Naive thymus-derived CD4-positive, alpha-beta T cell (primary cell): ENCODE measurements at regions of chr11 and their contacts with region 1.

Region 1: GRCh38 chr11:66311965-66312548 is 4.8 kb downstream of the CD248 start:
- DNase-seq: peak; percentile 93 to 100 (median 100)
- ATAC-seq: peak; percentile 84
- H3K4me3 ChIP-seq: peak overlapping the region; percentile 92
- H3K4me3 Mint-ChIP-seq: peak overlapping the region; percentile 63 to 97 (median 94)
- H3K27ac ChIP-seq: peak overlapping the region; percentile 79
- H3K27ac Mint-ChIP-seq: peak overlapping the region; percentile 93 to 100 (median 98)
- H3K4me1 ChIP-seq: peaks cover 11 to 34% of the 10 kb centered on the region in 2 donors
- H3K4me1 Mint-ChIP-seq: peaks cover 17 to 34% (median 25%) of the 10 kb centered on the region in 7 donors
- H3K27me3 ChIP-seq: no peaks in the 10 kb centered on the region
- H3K27me3 Mint-ChIP-seq: peaks cover 0 to 2% (median 0%) of the 10 kb centered on the region in 5 donors

Region 2: DNA sequence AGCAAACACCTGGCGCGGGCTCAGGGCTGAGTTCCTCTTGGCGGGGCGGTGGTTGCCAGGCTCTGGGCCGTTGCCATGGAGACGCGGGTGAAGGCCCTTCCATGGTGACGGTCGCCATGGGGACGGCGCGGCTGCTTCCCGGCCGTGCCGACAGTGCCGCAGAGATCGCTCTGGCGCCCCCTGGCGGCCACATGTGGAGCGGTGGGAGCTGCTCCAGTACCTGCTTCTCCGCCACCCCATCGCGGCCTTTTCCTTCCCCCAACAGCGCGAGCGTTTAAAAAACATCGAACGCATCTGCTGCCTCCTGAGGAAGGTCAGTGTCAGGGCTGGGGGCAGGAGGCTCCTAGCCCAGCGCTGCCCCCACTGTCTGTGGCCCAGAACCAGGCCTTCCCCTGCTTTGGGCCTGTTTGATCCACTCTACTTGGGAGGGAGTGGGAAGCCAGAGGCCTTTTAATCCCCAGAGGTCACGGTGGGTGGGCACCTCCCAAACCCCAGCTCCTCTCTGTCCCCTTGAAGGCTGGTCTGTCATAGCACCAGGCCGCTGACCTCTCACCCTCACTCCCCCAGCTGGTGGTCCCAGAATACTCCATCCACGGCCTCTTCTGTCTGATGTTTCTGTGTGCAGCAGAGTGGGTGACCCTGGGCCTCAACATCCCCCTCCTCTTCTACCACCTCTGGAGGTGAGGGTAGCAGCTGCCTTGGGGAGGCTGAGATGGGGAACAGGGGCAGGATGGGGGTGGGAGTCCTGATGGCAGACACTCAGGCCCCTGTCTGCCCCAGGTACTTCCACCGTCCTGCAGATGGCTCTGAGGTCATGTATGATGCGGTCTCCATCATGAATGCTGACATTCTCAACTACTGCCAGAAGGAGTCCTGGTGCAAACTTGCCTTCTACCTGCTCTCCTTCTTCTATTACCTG is 29.3 kb before region 1 on chr11:
- CTCF ChIA-PET with region 1: interaction called, 12 read pairs
- POLR2A ChIA-PET with region 1: interaction called, 6 read pairs
- intact Hi-C with region 1: no loop called
- DNase-seq: peak; percentile 96 to 100 (median 99)
- ATAC-seq: peak; percentile 94
- H3K4me3 ChIP-seq: no peak overlapping the region
- H3K4me3 Mint-ChIP-seq: peak overlapping the region in 9 of 10 donors; percentile 16 to 72 (median 59)
- H3K27ac ChIP-seq: peak overlapping the region; percentile 27
- H3K27ac Mint-ChIP-seq: peak overlapping the region; percentile 68 to 93 (median 85)
- H3K4me1 ChIP-seq: peaks cover 16 to 21% of the 10 kb centered on the region in 2 donors
- H3K4me1 Mint-ChIP-seq: peaks cover 18 to 52% (median 37%) of the 10 kb centered on the region in 7 donors
- H3K27me3 ChIP-seq: no peaks in the 10 kb centered on the region
- H3K27me3 Mint-ChIP-seq: peaks cover 0 to 14% (median 0%) of the 10 kb centered on the region in 5 donors

Region 3: DNA sequence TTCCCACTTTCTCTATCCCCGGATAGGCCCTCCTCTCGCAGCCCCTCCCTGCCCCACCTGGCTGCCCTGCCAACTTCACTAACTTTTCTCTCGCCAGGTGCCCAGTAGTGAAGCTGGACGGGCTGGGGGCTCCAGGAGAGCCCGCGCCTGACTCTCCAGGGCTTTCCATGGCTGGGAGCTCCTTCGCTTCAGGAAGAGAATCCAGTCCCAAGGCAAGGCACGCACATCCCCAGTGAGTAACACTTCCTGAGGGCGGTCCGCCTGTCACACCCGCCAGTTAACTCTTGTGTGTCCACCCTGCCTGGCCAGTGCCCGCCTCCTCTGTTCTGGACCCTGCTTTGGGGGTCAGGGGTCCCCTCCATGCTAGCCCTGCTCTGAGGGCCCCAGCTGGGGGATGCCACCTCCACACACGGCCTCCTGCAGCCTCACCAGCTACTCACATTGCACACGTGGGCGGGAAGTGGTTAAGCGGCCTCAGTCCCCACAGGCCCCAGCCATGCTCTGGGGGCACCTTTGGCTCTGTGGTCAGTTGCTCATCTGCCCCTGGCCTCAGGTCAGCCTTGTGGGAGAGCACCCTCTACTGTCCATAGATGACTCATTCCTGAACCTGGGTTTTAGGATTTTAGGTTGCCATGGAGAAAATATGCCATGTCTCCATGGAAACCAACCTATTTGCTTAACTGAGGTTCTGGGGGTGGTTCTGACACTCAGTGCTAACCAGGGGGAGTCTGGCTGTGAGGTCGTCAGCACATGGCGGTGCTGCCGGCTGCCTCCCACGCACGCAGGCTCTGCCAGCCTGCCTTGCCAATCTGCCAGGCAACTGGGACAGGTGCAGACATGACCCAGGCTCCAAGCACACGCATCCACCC is 24.4 kb after region 1 on chr11 and contains the start of gene RIN1:
- CTCF ChIA-PET with region 1: interaction called, 52 read pairs
- POLR2A ChIA-PET with region 1: interaction called, 28 read pairs
- intact Hi-C with region 1: no loop called
- DNase-seq: peak in 3 of 9 donors; percentile 24 to 62 (median 53)
- ATAC-seq: peak; percentile 85
- H3K4me3 ChIP-seq: peak within 1 kb of the TSS; percentile 52
- H3K4me3 Mint-ChIP-seq: peak within 1 kb of the TSS; percentile 77 to 96 (median 90)
- H3K27ac ChIP-seq: peak within 1 kb of the TSS; percentile 70
- H3K27ac Mint-ChIP-seq: peak within 1 kb of the TSS in 8 of 9 donors; percentile 8 to 88 (median 64)
- H3K4me1 ChIP-seq: peaks cover 7 to 15% of the 10 kb centered on the region in 2 donors
- H3K4me1 Mint-ChIP-seq: peaks cover 0 to 21% (median 11%) of the 10 kb centered on the region in 7 donors
- H3K27me3 ChIP-seq: no peaks in the 10 kb centered on the region
- H3K27me3 Mint-ChIP-seq: peaks cover 0 to 2% (median 0%) of the 10 kb centered on the region in 5 donors
- total RNA-seq, gene RIN1: 1.4 to 22.9 (median 12.3) TPM

Region 4: GRCh38 chr11:66386171-66387069 is 74.4 kb after region 1 on chr11:
- CTCF ChIA-PET with region 1: interaction called, 58 read pairs
- POLR2A ChIA-PET with region 1: interaction called, 11 read pairs
- intact Hi-C with region 1: loop called (anchors 1 kb)
- DNase-seq: peak; percentile 59 to 83 (median 75)
- ATAC-seq: peak; percentile 83
- H3K4me3 ChIP-seq: no peak overlapping the region
- H3K4me3 Mint-ChIP-seq: peak overlapping the region; percentile 5 to 71 (median 40)
- H3K27ac ChIP-seq: no peak overlapping the region
- H3K27ac Mint-ChIP-seq: peak overlapping the region in 4 of 9 donors; percentile 0 to 20 (median 6)
- H3K4me1 ChIP-seq: peaks cover 4 to 8% of the 10 kb centered on the region in 2 donors
- H3K4me1 Mint-ChIP-seq: peaks cover 0 to 12% (median 7%) of the 10 kb centered on the region in 7 donors
- H3K27me3 ChIP-seq: no peaks in the 10 kb centered on the region
- H3K27me3 Mint-ChIP-seq: peaks cover 0 to 15% (median 0%) of the 10 kb centered on the region in 5 donors

Region 5: DNA sequence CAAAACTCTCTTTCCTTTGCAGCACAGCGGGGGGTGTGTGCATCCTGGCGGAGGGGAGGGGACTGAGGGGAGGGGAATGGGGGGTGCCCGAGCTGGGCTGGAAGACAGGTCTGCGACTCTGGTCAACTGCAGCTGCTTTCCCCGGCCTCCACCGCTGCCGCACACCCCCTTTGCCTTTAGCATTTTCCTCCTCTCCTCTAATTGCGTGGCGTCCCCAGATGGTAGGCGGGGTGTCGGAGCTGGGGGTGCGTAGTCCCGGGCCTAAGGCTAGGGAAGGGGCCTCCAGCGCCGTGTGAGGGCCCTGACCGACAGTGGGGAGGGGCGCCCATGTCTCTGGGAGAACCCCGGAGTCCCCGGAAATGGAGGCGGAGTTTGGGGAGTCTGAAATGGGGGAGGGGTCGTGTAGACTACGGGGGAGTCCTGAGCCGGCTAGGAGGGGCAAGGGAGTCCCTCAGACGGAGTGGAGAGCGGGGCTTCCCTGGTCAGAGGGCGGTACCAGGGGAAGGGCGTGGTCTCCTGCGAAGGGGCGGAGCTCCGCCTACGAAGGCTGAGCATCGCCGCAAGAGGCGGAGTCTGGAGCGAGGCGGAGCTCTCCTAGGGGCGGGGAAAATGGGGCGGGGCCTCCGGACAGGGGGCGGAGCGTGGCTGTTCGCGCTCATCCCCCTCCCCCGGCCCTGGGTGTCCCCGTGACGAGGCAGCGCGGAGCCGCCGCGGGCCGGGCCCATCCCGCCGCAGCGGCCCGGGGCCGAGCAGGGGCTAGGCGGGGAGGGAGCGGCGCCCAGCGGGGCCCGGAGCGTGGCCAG is 154.4 kb after region 1 on chr11 and contains the start of gene PELI3:
- CTCF ChIA-PET with region 1: interaction called, 4 read pairs
- POLR2A ChIA-PET with region 1: no interaction called
- intact Hi-C with region 1: loop called (anchors 1 kb)
- DNase-seq: peak; percentile 86 to 95 (median 92)
- ATAC-seq: peak; percentile 97
- H3K4me3 ChIP-seq: peak within 1 kb of the TSS; percentile 78
- H3K4me3 Mint-ChIP-seq: peak within 1 kb of the TSS; percentile 89 to 96 (median 90)
- H3K27ac ChIP-seq: peak within 1 kb of the TSS; percentile 87
- H3K27ac Mint-ChIP-seq: peak within 1 kb of the TSS; percentile 87 to 97 (median 93)
- H3K4me1 ChIP-seq: peaks cover 8 to 10% of the 10 kb centered on the region in 2 donors
- H3K4me1 Mint-ChIP-seq: peaks cover 4 to 39% (median 24%) of the 10 kb centered on the region in 7 donors
- H3K27me3 ChIP-seq: no peaks in the 10 kb centered on the region
- H3K27me3 Mint-ChIP-seq: no peaks in the 10 kb centered on the region
- total RNA-seq, gene PELI3: 10.6 to 27.3 (median 18.6) TPM

Region 6: GRCh38 chr11:66677599-66678375 is 365.7 kb after region 1 on chr11 and contains the start of gene RBM4B:
- CTCF ChIA-PET with region 1: no interaction called
- POLR2A ChIA-PET with region 1: interaction called, 4 read pairs
- intact Hi-C with region 1: loop called in 1 of 2 experiments (anchors 1 kb)
- DNase-seq: peak; percentile 89 to 96 (median 94)
- ATAC-seq: peak; percentile 94
- H3K4me3 ChIP-seq: peak within 1 kb of the TSS; percentile 100
- H3K4me3 Mint-ChIP-seq: peak within 1 kb of the TSS; percentile 87 to 98 (median 96)
- H3K27ac ChIP-seq: peak within 1 kb of the TSS; percentile 95
- H3K27ac Mint-ChIP-seq: peak within 1 kb of the TSS; percentile 94 to 100 (median 99)
- H3K4me1 ChIP-seq: peaks cover 23 to 31% of the 10 kb centered on the region in 2 donors
- H3K4me1 Mint-ChIP-seq: peaks cover 21 to 49% (median 37%) of the 10 kb centered on the region in 7 donors
- H3K27me3 ChIP-seq: no peaks in the 10 kb centered on the region
- H3K27me3 Mint-ChIP-seq: no peaks in the 10 kb centered on the region
- total RNA-seq, gene RBM4B: 9.8 to 27.2 (median 19.7) TPM

Region 7: DNA sequence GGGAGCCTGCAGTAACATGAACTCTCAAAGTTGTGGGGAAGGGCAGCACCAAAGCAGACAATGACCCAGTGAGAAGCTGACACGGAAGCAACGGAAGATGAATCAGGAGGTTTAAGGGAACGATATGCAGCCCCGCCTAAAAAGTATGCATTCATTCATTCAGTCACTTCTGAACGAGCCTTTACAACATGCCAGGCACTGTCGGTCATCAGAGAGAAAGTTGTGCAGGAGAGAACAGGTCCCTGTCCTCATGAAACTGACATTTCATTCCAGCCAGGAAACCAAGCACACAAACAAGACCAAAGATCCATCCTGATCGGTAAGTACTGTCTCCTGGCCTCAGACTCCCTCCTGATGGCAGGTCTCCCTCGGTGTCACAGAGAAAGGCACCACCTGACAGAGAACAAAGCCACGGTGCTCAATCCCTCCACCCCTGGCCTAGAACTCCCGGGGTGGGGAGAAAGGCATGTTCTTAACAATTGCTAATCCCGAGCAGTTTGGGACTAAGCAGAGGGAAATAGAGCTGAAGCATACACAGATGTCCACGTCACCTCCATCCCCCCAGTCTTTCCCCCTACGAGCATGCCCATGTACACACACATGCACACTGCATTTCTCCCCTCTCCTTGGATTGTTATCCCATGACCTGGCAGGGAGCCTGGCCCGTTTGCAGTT is 594.1 kb after region 1 on chr11:
- CTCF ChIA-PET with region 1: no interaction called
- POLR2A ChIA-PET with region 1: no interaction called
- intact Hi-C with region 1: no loop called
- DNase-seq: no peak
- ATAC-seq: no peak
- H3K4me3 ChIP-seq: no peak overlapping the region
- H3K4me3 Mint-ChIP-seq: no peak overlapping the region
- H3K27ac ChIP-seq: no peak overlapping the region
- H3K27ac Mint-ChIP-seq: no peak overlapping the region
- H3K4me1 ChIP-seq: no peaks in the 10 kb centered on the region
- H3K4me1 Mint-ChIP-seq: no peaks in the 10 kb centered on the region
- H3K27me3 ChIP-seq: no peaks in the 10 kb centered on the region
- H3K27me3 Mint-ChIP-seq: peaks cover 0 to 3% (median 0%) of the 10 kb centered on the region in 5 donors